Heart right ventricle (tissue), 16 donors: ENCODE measurements at regions of chr19 and their contacts with region 1.

Region 1: DNA sequence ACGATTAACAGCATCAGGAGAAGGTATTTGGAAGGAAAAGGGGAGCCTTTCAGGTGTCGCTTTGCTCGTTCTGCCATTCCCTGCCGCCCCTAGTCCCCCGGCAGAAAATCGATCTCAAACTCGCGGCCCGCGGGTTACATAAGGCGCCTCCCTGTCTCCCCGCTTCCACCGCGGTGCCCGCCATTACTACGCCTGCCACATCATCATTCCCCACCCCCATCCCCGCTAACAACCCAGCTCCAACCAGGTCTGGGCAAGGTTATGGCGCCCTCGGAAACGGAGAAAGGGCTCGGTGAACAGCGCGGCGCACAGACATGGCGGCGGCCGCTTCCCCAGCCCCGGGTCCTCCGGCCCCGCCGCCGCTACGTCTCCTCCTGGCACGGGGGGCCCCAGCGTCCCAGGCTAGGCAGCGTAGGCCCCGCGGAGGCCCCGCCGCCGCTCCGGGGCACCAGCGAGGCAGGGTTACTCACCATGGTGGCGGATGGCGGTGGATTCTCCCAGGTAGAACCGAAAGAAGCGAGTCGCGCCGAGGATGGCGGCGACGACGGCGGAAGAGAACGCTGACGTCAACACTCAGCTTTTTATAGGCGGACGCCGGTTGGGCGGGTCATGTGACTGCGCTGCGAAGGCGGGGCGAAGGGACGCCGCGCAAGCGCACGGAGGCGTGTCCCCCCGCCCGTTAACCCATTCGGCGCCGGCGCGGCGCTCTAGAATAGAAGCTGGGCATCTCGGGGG is at the start of gene EEF2:
- DNase-seq: peak; percentile 91
- ATAC-seq: peak; percentile 56 to 85 (median 78)
- H3K4me3 ChIP-seq: peak within 1 kb of the TSS; percentile 85 to 100 (median 94)
- H3K27ac ChIP-seq: peak within 1 kb of the TSS; percentile 88 to 100 (median 96)
- H3K4me1 ChIP-seq: peaks cover 6 to 62% (median 45%) of the 10 kb centered on the region in 9 donors
- H3K27me3 ChIP-seq: no peaks in the 10 kb centered on the region
- CTCF ChIP-seq: no peak
- total RNA-seq, gene EEF2: 1,845 to 2,887 (median 2,645) TPM

Region 2: DNA sequence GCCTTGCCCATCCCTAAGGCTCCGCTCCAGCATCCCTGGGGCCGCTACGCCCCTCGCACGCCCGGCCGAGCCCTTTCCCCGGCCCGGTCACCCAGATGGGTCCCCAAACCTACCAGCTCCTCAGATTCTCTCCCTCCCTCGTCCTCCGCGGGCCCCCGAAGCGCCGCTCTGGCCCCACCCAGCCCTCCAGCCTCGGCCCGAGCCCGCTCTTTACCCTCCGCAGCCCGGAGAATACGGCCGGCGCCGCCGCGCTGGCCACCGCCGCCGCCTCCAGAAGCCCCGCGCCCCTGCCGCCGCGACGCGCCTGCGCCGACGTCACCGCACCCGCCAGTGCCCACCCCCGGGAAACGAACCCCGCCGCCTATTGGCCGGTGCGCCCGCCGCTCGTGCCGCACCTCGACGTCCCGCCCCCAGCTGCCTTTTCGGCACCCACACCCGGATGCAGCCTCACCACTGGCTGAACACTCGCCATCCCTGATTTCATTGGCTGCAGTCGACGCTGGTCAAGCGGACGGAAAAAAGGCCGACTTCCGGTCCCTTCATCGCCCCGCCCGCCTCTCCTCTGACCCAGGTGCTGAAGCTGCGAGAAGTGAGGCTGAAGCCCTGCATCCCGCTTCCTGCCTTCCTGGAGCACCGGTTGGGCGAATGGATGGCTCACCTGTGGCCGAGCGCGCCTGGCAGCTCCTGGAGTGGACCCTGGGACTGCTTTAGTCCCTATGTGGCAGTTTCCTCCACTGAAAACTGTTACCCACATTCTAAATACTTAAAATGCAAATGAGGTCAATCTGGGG is 14.1 kb before region 1 on chr19 and contains the start of gene DAPK3:
- intact Hi-C with region 1: loop called in 4 of 10 experiments (anchors 2 kb)
- DNase-seq: peak; percentile 98
- ATAC-seq: peak; percentile 77 to 88 (median 86)
- H3K4me3 ChIP-seq: peak within 1 kb of the TSS; percentile 77 to 99 (median 96)
- H3K27ac ChIP-seq: peak within 1 kb of the TSS; percentile 93 to 100 (median 98)
- H3K4me1 ChIP-seq: peaks cover 24 to 48% (median 46%) of the 10 kb centered on the region in 9 donors
- H3K27me3 ChIP-seq: no peaks in the 10 kb centered on the region
- CTCF ChIP-seq: peak in 4 of 9 donors; percentile 10 to 32 (median 15)
- total RNA-seq, gene DAPK3: 72.5 to 222 (median 99.5) TPM

Region 3: GRCh38 chr19:4123615-4124568 is 138.8 kb after region 1 on chr19 and contains the start of gene MAP2K2:
- intact Hi-C with region 1: loop called in 2 of 10 experiments (anchors 5 to 10 kb)
- DNase-seq: peak; percentile 95 to 98
- ATAC-seq: peak; percentile 96 to 99 (median 99)
- H3K4me3 ChIP-seq: peak within 1 kb of the TSS; percentile 60 to 88 (median 68)
- H3K27ac ChIP-seq: peak within 1 kb of the TSS; percentile 33 to 91 (median 74)
- H3K4me1 ChIP-seq: peaks cover 6 to 33% (median 23%) of the 10 kb centered on the region in 9 donors
- H3K27me3 ChIP-seq: no peaks in the 10 kb centered on the region
- CTCF ChIP-seq: peak in 1 of 9 donors; percentile 16
- total RNA-seq, gene MAP2K2: 91.5 to 155 (median 101) TPM

Region 4: DNA sequence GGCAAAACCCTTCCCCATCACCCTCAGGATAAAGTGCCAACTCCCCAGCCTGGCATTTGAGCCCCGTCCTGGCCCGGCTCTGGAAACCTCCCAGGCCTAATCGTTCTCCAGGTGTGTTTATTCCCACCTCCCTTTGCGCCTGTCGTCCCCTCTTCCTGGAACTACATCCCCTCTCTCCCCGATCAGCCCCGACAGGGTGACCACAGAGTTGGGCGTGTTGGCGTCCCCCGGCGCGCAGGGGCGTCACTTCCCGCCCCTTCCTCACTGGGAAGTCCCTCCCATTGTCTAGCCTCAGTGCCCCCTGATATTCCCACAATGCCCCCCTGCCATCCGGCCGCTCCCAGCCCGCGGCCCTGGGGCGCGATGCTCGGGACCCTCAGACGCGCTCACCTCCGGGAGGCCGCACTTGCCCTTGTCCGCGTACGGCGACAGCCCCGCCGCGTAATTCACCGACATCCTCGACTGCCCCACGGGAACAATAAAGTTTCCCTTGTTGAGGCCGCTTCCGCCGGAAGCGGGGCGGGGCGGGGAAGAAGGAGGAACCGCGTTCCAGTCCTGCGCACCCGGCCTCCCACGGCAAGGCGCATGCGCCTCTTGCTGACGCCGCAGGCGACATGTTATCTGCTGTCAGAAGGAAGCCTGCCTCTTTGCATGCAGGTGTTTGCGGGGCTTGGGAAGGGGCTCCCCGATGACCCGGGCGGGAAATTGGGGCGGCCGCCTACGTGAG is 197.2 kb after region 1 on chr19 and contains the starts of genes ANKRD24 and SIRT6:
- intact Hi-C with region 1: loop called in 1 of 10 experiments (anchors 5 kb)
- DNase-seq: peak; percentile 96 to 97
- ATAC-seq: peak; percentile 95 to 98 (median 98)
- H3K4me3 ChIP-seq: peak within 1 kb of the TSS; percentile 73 to 97 (median 88)
- H3K27ac ChIP-seq: peak within 1 kb of the TSS; percentile 63 to 94 (median 83)
- H3K4me1 ChIP-seq: peaks cover 0 to 37% (median 20%) of the 10 kb centered on the region in 9 donors
- H3K27me3 ChIP-seq: no peaks in the 10 kb centered on the region
- CTCF ChIP-seq: no peak
- total RNA-seq, gene ANKRD24: 0.12 to 1.0 (median 0.29) TPM
- total RNA-seq, gene SIRT6: 7.9 to 14.6 (median 11.9) TPM

Region 5: GRCh38 chr19:4208385-4209094 is 223.5 kb after region 1 on chr19:
- intact Hi-C with region 1: loop called (anchors 1 to 10 kb)
- DNase-seq: no peak
- ATAC-seq: no peak
- H3K4me3 ChIP-seq: no peak overlapping the region
- H3K27ac ChIP-seq: no peak overlapping the region
- H3K4me1 ChIP-seq: peaks cover 0 to 8% (median 3%) of the 10 kb centered on the region in 9 donors
- H3K27me3 ChIP-seq: peaks cover 0 to 18% (median 0%) of the 10 kb centered on the region in 7 donors
- CTCF ChIP-seq: peak in 6 of 9 donors; percentile 15 to 40 (median 20)